ENCODE measurements at regions of chr12 and their contacts with region 1.

Region 1: DNA sequence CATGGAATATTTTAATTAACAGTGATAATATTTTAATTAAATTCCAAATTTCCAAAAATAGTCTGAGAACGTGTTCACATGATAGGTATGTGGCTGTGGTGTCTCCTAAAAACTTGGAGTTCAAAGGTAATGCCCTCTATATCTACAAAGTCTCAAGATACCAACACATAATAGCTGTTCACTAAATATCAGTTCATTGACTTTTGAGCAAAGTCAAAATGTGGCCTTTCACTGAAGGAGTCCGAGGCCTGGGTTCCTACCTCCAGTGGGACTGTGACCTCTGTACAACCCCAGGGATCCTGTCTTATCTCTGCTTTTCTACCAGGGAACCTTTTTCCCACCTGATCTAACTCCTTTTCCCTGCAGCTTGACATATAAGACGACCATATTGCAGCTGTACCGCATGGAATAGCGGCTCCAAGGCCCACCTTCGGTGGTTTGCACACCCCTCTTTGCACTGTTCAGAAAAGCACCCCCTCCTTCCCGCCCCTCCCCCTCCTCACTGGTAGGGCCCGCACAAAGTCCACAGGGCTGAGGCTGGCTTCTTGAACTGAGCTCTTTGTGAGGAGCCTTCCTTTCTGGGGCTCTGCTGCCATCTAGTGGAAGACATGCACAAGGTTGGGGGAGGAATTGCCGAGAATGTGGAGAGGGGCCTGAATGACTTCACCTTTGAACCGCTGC is 3.1 kb downstream of the CCND2 start:
- DNase-seq: peak; percentile 64 to 65
- ATAC-seq: peak; percentile 62 to 68
- H3K4me3 ChIP-seq: no peak overlapping the region
- H3K27ac ChIP-seq: no peak overlapping the region
- H3K4me1 ChIP-seq: peaks cover 29 to 39% of the 10 kb centered on the region in 2 donors
- H3K27me3 ChIP-seq: peaks cover 50 to 57% (median 56%) of the 10 kb centered on the region in 3 donors
- CTCF ChIP-seq: peak; percentile 82 to 95 (median 88)
- POLR2A ChIP-seq: no peak

Region 2: DNA sequence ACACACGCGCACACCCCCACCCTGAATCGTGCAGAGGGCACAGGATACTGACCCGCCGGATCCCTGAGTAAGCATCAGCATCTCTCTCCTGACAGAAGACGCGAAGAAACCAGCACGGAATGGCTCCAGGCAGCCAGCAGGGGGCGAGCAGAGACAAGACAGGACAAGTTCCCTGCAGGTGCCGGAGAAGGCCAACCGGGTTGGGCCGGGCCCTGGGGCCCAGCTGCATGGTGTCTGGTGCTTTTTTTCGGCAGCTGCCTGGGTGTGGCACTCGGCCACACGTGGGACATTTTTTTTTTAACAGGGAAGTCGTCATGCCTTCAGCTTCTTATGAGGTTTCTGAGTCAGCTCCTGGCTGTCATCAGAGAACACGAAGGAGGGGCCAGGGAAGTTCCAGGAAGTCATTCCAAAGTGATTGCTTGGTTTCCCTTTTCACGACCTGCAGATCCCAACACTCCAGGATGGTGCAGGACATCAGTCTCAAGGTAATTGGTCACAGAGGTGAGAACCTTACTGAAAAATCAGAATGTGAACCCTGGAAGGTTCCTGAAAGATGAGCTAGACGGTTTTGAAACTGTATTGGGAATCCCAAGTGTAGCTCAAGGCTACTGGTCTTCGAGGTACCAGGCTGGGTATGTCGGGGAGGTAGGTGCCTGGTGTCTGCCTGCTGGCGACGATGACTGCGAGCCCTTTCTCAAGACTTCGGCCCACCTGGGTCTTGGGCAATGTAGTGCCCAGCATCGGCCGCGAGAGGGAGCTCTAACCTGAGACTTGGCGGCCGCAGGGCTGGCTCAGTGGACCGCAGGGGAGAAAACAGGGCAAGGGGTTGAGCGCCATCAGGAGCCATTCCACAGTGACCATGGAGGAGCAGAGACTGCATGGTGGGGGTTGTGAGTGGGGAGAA is 976.5 kb before region 1 on chr12:
- in situ Hi-C with region 1: no loop called
- intact Hi-C with region 1: loop called (anchors 5 kb)
- DNase-seq: peak; percentile 90 to 92
- ATAC-seq: peak; percentile 93 to 96
- H3K4me3 ChIP-seq: peak overlapping the region in 3 of 4 donors; percentile 15 to 43 (median 28)
- H3K27ac ChIP-seq: peak overlapping the region; percentile 64 to 76 (median 74)
- H3K4me1 ChIP-seq: peaks cover 14% of the 10 kb centered on the region in 2 donors
- H3K27me3 ChIP-seq: no peaks in the 10 kb centered on the region
- CTCF ChIP-seq: peak; percentile 82 to 91 (median 84)
- POLR2A ChIP-seq: no peak

Region 3: GRCh38 chr12:3885277-3886094 is 391.2 kb before region 1 on chr12:
- in situ Hi-C with region 1: loop called (anchors 5 to 10 kb)
- intact Hi-C with region 1: loop called (anchors 1 kb)
- DNase-seq: no peak
- ATAC-seq: peak in 1 of 2 donors; percentile 30
- H3K4me3 ChIP-seq: peak overlapping the region in 3 of 4 donors; percentile 11 to 31 (median 17)
- H3K27ac ChIP-seq: peak overlapping the region in 3 of 4 donors; percentile 36 to 43 (median 40)
- H3K4me1 ChIP-seq: peaks cover 0 to 3% of the 10 kb centered on the region in 2 donors
- H3K27me3 ChIP-seq: peaks cover 0 to 11% (median 6%) of the 10 kb centered on the region in 3 donors
- CTCF ChIP-seq: peak; percentile 65 to 80 (median 78)
- POLR2A ChIP-seq: no peak

Region 4: GRCh38 chr12:3998968-3999826 is 277.5 kb before region 1 on chr12:
- in situ Hi-C with region 1: no loop called
- intact Hi-C with region 1: loop called (anchors 10 kb)
- DNase-seq: no peak
- ATAC-seq: no peak
- H3K4me3 ChIP-seq: no peak overlapping the region
- H3K27ac ChIP-seq: no peak overlapping the region
- H3K4me1 ChIP-seq: no peaks in the 10 kb centered on the region
- H3K27me3 ChIP-seq: no peaks in the 10 kb centered on the region
- CTCF ChIP-seq: no peak
- POLR2A ChIP-seq: no peak

Region 5: DNA sequence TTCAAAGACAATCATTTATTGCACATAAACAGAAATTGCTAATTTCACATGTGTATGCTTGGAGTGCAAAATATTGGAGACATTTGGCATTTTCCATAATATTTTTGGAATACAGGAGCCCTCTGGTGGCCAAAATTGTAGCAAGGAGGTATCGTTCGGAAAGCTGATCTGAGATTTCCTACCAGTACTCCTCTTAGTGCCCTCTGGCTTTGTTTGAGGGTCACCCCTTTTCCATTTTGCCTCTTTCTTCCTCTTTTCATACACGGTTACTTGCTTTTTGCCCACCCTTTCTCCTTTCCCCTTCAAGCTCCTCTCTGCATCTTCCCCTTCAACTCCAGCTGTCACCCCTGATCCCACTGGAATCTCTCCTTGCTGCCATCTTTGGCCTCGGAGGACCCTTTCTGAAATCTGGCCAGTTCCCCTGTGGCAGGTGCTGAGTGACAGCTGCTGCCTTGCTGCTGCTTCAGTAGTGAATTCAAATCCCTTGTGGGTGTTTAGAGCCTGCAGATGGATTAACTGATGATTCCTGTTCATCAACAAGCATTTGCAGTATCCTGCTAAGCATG is 238.8 kb before region 1 on chr12:
- in situ Hi-C with region 1: loop called in 1 of 4 experiments (anchors 10 kb)
- intact Hi-C with region 1: loop called (anchors 5 kb)
- DNase-seq: peak in 1 of 2 donors; percentile 17
- ATAC-seq: no peak
- H3K4me3 ChIP-seq: no peak overlapping the region
- H3K27ac ChIP-seq: no peak overlapping the region
- H3K4me1 ChIP-seq: no peaks in the 10 kb centered on the region
- H3K27me3 ChIP-seq: peaks cover 0 to 5% (median 0%) of the 10 kb centered on the region in 3 donors
- CTCF ChIP-seq: peak; percentile 16 to 67 (median 51)
- POLR2A ChIP-seq: no peak

Region 6: GRCh38 chr12:4379405-4379804 is 102.7 kb after region 1 on chr12 and contains the start of gene FGF23:
- in situ Hi-C with region 1: no loop called
- intact Hi-C with region 1: no loop called
- DNase-seq: no peak
- ATAC-seq: no peak
- H3K4me3 ChIP-seq: no peak within 1 kb of the TSS
- H3K27ac ChIP-seq: no peak within 1 kb of the TSS
- H3K4me1 ChIP-seq: no peaks in the 10 kb centered on the region
- H3K27me3 ChIP-seq: peaks cover 0 to 2% (median 0%) of the 10 kb centered on the region in 3 donors
- CTCF ChIP-seq: no peak
- POLR2A ChIP-seq: no peak
- total RNA-seq, gene FGF23: not detected

Region 7: DNA sequence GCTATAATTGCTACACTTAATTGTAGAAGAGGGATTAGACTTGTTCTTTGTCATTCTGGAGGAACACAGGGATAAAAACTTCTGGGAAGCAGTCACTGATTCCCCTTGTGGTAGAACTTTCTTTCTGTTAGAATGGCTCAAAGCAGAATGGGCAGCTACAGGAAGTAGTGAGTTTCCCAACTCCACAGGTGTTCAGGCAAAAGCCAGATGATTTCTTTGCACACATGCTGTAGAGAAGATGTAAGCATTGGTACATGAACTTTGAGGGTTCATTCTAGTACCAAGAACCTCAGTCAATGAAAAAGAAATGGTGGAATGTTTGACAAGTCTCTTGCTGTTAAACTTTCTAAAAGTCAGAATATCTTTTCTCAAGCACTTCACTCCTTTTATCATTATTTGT is 376.6 kb after region 1 on chr12:
- in situ Hi-C with region 1: no loop called
- intact Hi-C with region 1: no loop called
- DNase-seq: no peak
- ATAC-seq: no peak
- H3K4me3 ChIP-seq: no peak overlapping the region
- H3K27ac ChIP-seq: no peak overlapping the region
- H3K4me1 ChIP-seq: peaks cover 37 to 41% of the 10 kb centered on the region in 2 donors
- H3K27me3 ChIP-seq: no peaks in the 10 kb centered on the region
- CTCF ChIP-seq: no peak
- POLR2A ChIP-seq: no peak

Measured in gastrocnemius medialis (tissue), 4 donors.